ENCODE measurements at regions of chr12 and their contacts with region 1.

Region 1: DNA sequence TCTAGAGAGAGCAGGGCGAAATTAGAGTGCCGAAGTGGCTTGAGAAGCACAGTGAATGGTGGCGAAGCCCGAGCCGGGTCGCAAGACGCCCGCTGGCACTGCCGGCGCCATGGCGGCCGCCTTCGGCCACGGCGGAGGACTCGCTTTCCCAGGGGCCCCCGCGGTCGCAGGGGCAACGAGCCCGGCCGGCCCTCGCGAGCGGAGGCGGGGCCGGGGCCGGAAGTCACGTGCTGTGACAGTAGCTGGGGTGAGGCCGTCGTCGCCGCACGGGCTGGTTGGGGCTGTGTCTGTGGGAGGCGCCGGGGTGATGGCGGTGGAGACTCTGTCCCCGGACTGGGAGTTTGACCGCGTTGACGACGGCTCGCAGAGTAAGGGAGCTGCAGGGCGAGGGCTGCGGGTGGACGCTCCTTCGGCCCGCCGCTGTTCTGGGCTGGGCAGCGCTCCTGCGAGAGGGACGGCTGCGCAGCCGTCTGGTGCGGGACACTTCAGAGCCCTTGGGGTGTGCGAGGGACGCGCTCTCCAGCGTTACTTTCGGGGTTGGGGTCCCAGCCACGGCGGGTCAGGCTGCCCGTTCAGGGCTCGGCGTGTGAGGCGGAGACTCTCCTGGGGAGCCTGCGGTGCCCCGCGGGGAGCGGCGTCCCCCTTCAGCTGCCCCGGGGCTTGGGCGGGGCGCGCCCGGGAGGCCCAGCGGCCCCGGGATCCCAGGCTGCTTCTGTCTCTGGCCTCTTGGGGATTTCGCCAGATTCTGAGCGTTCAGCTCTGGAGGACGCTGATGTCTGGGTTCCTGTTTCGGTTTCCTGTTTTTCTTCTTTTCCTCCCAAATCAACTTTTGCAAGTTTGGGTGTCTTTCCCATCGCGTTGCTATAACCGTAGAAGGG is at the start of gene WASHC4:
- DNase-seq: peak; percentile 76 to 91
- H3K4me3 ChIP-seq: peak within 1 kb of the TSS; percentile 73 to 96 (median 82)
- H3K27ac ChIP-seq: peak within 1 kb of the TSS; percentile 74
- H3K4me1 ChIP-seq: peaks cover 0 to 4% (median 2%) of the 10 kb centered on the region in 4 experiments; a peak in 4 of 7 replicates
- H3K27me3 ChIP-seq: no peaks in the 10 kb centered on the region
- CTCF ChIP-seq: no peak
- EP300 ChIP-seq: no peak
- POLR2A ChIP-seq: peak; percentile 93
- RAD21 ChIP-seq: no peak
- total RNA-seq, gene WASHC4: 38.5 and 40.2 TPM in 2 replicates

Region 2: DNA sequence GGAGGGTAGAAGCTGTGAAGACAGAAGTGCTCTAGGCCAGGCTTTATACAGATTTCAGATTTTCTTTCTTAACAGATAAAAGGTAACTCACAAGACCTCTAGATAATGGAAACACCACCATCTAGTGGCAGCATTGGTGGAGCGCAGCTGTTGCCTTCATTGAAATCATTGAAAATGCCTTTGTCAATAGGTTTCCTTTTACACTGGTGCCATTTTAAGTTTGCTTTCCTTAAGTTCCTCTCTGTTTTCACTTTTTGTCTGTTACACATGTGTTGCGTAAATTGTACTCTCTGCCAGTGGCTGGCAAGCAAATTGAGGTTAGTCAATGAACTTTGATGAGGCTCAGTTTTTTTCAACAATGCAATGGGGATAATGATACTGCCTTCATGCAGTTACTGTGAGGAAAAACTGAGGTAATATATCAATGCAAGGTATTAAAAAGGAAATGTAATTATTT is 54.6 kb before region 1 on chr12:
- CTCF ChIA-PET with region 1: no interaction called
- POLR2A ChIA-PET with region 1: no interaction called
- DNase-seq: peak; percentile 44 to 86
- H3K4me3 ChIP-seq: no peak overlapping the region
- H3K27ac ChIP-seq: no peak overlapping the region
- H3K4me1 ChIP-seq: no peaks in the 10 kb centered on the region
- H3K27me3 ChIP-seq: no peaks in the 10 kb centered on the region
- CTCF ChIP-seq: peak in 2 of 3 experiments; percentile 80 to 93; a peak in 3 of 4 replicates
- EP300 ChIP-seq: no peak
- POLR2A ChIP-seq: no peak
- RAD21 ChIP-seq: peak; percentile 93 to 95

Region 3: GRCh38 chr12:105084251-105085250 is 23.2 kb before region 1 on chr12 and contains the start of gene ALDH1L2:
- CTCF ChIA-PET with region 1: interaction called, 3 read pairs
- POLR2A ChIA-PET with region 1: interaction called, 16 read pairs
- DNase-seq: peak; percentile 73 to 99
- H3K4me3 ChIP-seq: peak within 1 kb of the TSS; percentile 51 to 73 (median 63)
- H3K27ac ChIP-seq: no peak within 1 kb of the TSS
- H3K4me1 ChIP-seq: peaks cover 4 to 9% (median 5%) of the 10 kb centered on the region in 4 experiments; a peak in 6 of 7 replicates
- H3K27me3 ChIP-seq: peaks cover 0 to 4% (median 2%) of the 10 kb centered on the region in 4 experiments; a peak in 3 of 7 replicates
- CTCF ChIP-seq: no peak
- EP300 ChIP-seq: no peak
- POLR2A ChIP-seq: peak; percentile 59 to 61
- RAD21 ChIP-seq: peak in 1 of 2 experiments; percentile 4; a peak in 1 of 4 replicates
- total RNA-seq, gene ALDH1L2: 4.4 and 7.2 TPM in 2 replicates

Region 4: DNA sequence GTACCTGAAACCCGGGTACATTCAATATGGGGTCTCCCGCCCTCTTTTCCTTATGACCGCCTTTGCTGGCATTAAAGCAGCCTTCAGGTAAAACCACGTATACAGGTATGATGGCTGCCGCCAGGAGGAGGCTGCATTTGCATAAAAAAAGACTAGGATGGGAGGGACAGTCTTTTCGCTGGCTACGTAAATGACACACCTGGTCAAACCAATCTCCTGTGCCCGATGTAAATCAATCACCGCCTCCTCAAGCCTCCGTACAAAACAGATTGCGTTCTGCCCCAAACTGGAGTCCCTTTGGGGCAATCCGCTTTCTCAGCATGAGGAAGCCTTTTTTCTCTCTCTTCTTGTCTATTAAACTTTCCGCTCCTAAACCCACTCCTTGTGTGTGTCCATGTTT is 15.4 kb before region 1 on chr12:
- CTCF ChIA-PET with region 1: interaction called, 3 read pairs
- POLR2A ChIA-PET with region 1: interaction called, 31 read pairs
- DNase-seq: peak; percentile 64 to 89
- H3K4me3 ChIP-seq: peak overlapping the region in 3 of 4 experiments; percentile 2 to 49 (median 2); a peak in 5 of 8 replicates
- H3K27ac ChIP-seq: peak overlapping the region; percentile 89
- H3K4me1 ChIP-seq: peaks cover 14 to 29% (median 20%) of the 10 kb centered on the region in 4 experiments; a peak in 6 of 7 replicates
- H3K27me3 ChIP-seq: no peaks in the 10 kb centered on the region
- CTCF ChIP-seq: no peak
- EP300 ChIP-seq: no peak
- POLR2A ChIP-seq: peak; percentile 86 to 91
- RAD21 ChIP-seq: no peak

Region 5: DNA sequence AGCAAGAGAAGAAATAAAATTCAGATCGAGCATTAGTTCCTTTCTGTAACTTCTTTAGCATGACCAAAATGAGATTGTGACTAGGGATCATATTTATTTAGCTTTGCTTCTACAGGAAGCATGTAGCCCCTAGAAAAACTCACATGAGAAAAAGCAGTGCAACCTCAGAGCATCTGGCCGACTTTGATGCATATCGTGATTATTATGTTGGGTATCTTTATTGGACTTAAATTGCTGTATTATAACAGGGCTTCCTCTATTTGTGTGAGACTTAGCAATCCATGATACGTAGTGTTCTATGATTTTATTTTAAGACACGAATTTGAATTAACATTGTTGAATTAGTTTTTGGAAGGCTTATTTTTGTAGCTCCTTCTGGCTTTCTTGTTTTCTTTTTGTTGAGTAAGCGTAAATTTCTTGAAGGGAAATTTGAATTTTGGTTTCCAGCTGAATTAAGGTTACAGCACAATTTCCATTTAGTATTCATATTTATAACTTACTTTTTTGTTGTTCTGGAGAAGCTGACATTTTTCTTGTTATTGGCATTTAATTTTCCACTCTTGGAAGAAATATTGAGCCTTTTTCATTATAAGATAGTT is 33.7 kb after region 1 on chr12:
- CTCF ChIA-PET with region 1: no interaction called
- POLR2A ChIA-PET with region 1: no interaction called
- DNase-seq: no peak
- H3K4me3 ChIP-seq: no peak overlapping the region
- H3K27ac ChIP-seq: no peak overlapping the region
- H3K4me1 ChIP-seq: no peaks in the 10 kb centered on the region
- H3K27me3 ChIP-seq: no peaks in the 10 kb centered on the region
- CTCF ChIP-seq: no peak
- EP300 ChIP-seq: no peak
- POLR2A ChIP-seq: no peak
- RAD21 ChIP-seq: no peak